ENCODE measurements at regions of chr1 and their contacts with region 1.

Region 1: GRCh38 chr1:119286587-119287181 is 81.9 kb upstream of the HAO2 start:
- DNase-seq: peak; percentile 47
- H3K4me3 Mint-ChIP-seq: no peak overlapping the region
- H3K27ac Mint-ChIP-seq: no peak overlapping the region
- H3K4me1 Mint-ChIP-seq: no peaks in the 10 kb centered on the region
- H3K27me3 Mint-ChIP-seq: peaks cover 13% of the 10 kb centered on the region

Region 2: GRCh38 chr1:119275145-119276134 is 11.2 kb before region 1 on chr1:
- CTCF ChIA-PET with region 1: interaction called, 11 read pairs
- intact Hi-C with region 1: no loop called
- DNase-seq: peak; percentile 70
- H3K4me3 Mint-ChIP-seq: no peak overlapping the region
- H3K27ac Mint-ChIP-seq: no peak overlapping the region
- H3K4me1 Mint-ChIP-seq: no peaks in the 10 kb centered on the region
- H3K27me3 Mint-ChIP-seq: no peaks in the 10 kb centered on the region

Region 3: DNA sequence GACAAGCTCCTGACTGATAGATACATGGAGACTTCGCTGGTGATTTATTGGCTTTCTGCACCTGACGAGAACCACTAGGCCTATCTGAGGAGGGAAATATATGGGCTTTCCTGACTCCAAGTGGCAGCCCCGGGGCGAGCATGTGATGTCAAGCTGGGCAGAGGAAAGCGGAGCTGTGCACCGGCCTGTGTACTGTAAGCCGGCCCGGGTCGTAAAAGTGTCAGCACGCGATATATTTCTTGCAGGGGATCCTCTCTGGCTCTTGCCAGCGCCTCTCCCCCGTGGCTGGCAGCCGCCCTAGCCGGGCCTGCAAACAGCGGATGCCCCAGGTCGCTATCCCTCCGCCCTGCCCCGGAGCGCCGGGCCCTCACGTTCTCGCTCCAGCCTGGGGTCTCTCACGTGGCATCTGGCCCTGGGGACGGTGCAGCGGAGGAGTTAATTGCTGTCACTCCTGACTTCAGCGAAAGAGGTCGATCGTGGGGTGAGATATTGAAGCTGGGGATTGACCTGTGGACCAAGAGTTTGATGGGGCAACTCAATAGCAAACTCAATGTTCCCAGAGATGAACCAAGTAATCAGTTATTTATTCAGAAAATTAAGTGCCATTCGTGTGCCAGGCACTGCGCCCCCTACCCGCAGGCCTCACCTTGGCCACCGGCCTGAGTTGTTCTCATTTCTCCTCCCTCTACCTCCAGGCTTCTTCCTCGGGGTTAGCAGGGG is 40.9 kb after region 1 on chr1:
- CTCF ChIA-PET with region 1: interaction called, 4 read pairs
- intact Hi-C with region 1: loop called (anchors 2 kb)
- DNase-seq: peak; percentile 48
- H3K4me3 Mint-ChIP-seq: peak overlapping the region; percentile 72
- H3K27ac Mint-ChIP-seq: no peak overlapping the region
- H3K4me1 Mint-ChIP-seq: peaks cover 10% of the 10 kb centered on the region
- H3K27me3 Mint-ChIP-seq: peaks cover 14% of the 10 kb centered on the region

Region 4: DNA sequence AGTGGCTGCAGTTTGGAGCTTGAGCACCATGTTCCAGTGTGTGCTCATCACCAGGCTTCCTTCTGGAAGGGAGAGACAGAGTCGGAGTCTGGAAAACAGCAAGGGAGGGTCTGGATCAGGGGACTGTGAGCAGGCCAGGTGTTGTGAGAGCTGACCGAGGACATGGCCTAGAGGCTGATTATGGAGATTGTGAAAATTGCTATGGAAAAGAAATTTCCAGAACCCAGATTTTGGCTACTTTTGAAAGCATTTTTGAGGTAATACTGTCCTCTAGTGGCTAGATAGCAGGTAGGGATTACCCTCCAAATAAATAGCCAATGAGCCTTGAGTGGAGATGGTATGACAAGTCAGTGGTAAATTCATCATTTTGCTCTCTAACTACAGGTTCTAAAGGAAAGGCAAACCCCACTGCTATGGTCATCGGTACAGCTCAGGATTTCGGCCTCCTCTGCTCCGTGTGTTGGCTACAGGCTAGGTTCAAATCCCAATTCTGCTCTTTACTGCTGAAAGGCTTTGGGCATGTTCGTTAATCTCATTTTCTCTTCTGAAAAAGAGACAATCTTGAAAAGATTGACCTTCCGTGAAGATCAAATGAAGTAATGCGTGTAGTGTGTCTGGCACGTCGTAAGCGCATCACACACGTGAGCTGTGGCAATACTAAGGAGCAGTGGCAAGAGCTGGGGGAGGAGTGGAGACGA is 80.9 kb after region 1 on chr1:
- CTCF ChIA-PET with region 1: interaction called, 10 read pairs
- intact Hi-C with region 1: loop called (anchors 1 kb)
- DNase-seq: no peak
- H3K4me3 Mint-ChIP-seq: no peak overlapping the region
- H3K27ac Mint-ChIP-seq: no peak overlapping the region
- H3K4me1 Mint-ChIP-seq: no peaks in the 10 kb centered on the region
- H3K27me3 Mint-ChIP-seq: peaks cover 25% of the 10 kb centered on the region

Region 5: DNA sequence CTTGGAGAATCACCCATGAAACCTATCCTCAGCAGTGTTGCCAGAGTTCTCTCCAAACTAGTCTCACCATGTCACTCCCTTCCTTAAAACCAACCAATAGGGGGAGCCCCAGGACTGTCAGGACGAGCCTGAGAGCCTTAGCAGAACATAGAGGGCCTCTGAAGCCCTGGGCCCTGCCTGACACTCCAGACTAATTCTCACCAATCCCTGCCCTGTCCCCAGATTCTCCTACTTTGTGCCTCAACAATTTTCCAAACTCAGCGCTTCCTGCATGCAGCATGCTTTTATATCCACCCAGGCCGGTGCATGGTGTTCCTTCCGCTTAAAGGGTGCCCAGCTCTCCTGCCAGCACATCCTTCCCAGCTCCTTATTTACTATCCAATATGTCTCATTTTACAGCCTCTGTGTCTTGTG is 263.0 kb after region 1 on chr1:
- CTCF ChIA-PET with region 1: no interaction called
- intact Hi-C with region 1: loop called (anchors 10 kb)
- DNase-seq: peak; percentile 52
- H3K4me3 Mint-ChIP-seq: no peak overlapping the region
- H3K27ac Mint-ChIP-seq: no peak overlapping the region
- H3K4me1 Mint-ChIP-seq: no peaks in the 10 kb centered on the region
- H3K27me3 Mint-ChIP-seq: peaks cover 2% of the 10 kb centered on the region

Region 6: GRCh38 chr1:119613769-119614720 is 327.4 kb after region 1 on chr1:
- CTCF ChIA-PET with region 1: interaction called, 4 read pairs
- intact Hi-C with region 1: loop called (anchors 2 kb)
- DNase-seq: peak; percentile 86
- H3K4me3 Mint-ChIP-seq: no peak overlapping the region
- H3K27ac Mint-ChIP-seq: no peak overlapping the region
- H3K4me1 Mint-ChIP-seq: no peaks in the 10 kb centered on the region
- H3K27me3 Mint-ChIP-seq: no peaks in the 10 kb centered on the region

Region 7: DNA sequence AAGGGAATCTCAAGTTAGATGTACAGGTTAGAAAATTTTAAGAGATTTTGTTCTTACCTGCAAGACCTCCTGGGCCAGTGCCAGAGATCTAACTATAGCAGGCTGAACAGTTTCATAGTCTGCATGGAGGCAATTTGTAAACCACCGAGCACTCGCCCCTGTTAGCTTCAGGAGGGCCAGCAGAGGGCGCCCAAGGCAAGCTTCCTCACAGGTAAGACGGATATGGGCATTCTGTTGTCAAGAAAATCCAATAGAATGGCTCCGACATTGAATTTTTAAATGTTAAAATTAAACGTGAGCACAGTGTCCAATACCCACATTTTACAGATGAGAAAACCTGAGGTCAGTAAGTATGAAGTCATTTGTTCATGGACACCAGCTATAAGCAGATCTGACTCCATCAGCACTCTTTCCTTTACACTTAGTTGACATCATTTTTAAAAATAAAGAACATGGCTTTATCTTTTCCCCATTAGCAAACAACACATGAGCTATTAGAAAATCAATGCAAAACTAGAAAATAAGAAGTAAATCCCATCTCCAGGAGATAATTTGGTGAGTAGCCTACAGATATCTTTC is 522.4 kb after region 1 on chr1:
- CTCF ChIA-PET with region 1: no interaction called
- intact Hi-C with region 1: no loop called
- DNase-seq: peak; percentile 82
- H3K4me3 Mint-ChIP-seq: no peak overlapping the region
- H3K27ac Mint-ChIP-seq: no peak overlapping the region
- H3K4me1 Mint-ChIP-seq: peaks cover 3% of the 10 kb centered on the region
- H3K27me3 Mint-ChIP-seq: peaks cover 2% of the 10 kb centered on the region

Measured in activated naive CD4-positive, alpha-beta T cell treated with anti-CD3 and anti-CD28 coated beads for 36 hours (primary cell).